OCI-LY7 (cell line): ENCODE measurements at regions of chr6 and their contacts with region 1.

Region 1: DNA sequence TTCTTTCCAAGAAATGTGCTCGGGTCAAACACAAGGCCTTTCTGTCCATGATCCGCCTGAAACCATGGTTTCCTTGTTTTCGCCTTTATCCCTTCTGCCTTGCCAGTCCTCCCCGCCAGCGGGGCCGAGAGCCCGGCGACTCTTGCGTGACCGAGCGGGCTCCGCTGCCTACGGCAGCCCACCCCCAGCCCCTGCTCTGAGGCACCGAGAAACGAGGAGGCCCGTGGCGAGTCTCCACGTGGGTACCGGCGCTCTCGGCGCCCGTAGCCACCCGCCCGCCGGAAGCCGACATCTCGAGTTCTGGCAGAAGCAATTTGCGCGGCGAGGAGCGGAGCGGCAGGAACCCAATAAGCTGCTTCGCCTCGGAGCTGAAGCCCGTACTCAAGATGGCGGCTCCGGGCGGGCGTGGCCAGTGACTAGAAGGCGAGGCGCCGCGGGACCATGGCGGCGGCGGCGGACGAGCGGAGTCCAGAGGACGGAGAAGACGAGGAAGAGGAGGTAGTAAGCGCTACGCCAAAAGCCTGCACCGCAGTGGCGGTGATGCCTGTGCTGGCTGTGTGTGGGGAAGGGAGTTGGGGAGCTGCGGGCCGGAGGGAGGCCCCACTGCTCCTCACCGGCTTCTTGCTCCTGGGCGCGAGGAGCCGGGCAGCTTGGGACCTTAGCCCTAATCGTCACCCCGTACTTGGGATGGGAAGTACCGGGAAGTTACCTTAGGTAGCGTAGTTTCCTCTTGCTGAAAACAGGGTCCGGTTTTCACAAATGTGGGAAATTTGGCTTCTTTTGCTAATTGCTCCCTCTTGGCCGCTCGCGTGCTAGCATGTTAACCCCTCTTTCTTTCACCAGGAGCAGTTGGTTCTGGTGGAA is at the start of gene GTF3C6:
- DNase-seq: peak; percentile 96
- H3K4me3 ChIP-seq: peak within 1 kb of the TSS; percentile 78
- H3K27ac ChIP-seq: peak within 1 kb of the TSS; percentile 49
- H3K4me1 ChIP-seq: peaks cover 17% of the 10 kb centered on the region
- CTCF ChIP-seq: no peak
- total RNA-seq, gene GTF3C6: 29.7 and 56.8 TPM in 2 replicates

Region 2: DNA sequence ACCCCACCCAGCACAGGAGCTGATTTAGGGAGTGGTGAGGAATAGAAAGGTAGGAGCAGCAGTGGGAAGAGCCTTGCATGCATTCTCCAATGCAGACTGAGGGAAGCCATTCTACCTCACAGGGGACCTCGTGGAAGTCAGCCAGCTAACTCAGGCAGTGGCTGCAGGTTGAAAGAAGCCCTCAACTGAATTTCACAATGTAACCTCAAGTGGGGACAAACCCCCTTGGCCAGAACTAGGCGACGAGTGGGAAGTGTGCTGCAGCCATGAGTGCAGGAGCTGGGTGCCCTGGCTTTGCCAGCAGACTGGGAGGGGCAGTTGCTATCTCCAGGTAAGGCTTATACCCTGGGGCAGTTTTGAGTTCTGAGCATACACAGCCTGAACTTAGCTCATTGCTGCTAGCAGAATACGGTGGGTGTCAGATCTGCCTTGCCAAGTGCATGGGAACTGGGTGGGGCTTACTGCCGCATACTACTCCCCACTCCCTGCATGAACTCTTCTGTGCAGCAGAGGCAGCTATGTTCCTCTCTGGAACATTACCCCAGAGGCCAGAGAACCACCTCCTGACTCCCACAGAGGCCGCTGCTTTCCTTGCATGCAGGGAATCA is 269.8 kb before region 1 on chr6:
- CTCF ChIA-PET with region 1: no interaction called
- POLR2A ChIA-PET with region 1: no interaction called
- intact Hi-C with region 1: no loop called
- DNase-seq: no peak
- H3K4me3 ChIP-seq: no peak overlapping the region
- H3K27ac ChIP-seq: no peak overlapping the region
- H3K4me1 ChIP-seq: peaks cover 5% of the 10 kb centered on the region
- CTCF ChIP-seq: no peak

Region 3: GRCh38 chr6:110815217-110816109 is 143.1 kb before region 1 on chr6 and contains the start of gene CDK19:
- CTCF ChIA-PET with region 1: no interaction called
- POLR2A ChIA-PET with region 1: interaction called, 3 read pairs
- intact Hi-C with region 1: loop called (anchors 2 kb)
- DNase-seq: peak; percentile 99
- H3K4me3 ChIP-seq: peak within 1 kb of the TSS; percentile 78
- H3K27ac ChIP-seq: peak within 1 kb of the TSS; percentile 87
- H3K4me1 ChIP-seq: peaks cover 41% of the 10 kb centered on the region
- CTCF ChIP-seq: no peak
- total RNA-seq, gene CDK19: 15.4 and 16.3 TPM in 2 replicates

Region 4: DNA sequence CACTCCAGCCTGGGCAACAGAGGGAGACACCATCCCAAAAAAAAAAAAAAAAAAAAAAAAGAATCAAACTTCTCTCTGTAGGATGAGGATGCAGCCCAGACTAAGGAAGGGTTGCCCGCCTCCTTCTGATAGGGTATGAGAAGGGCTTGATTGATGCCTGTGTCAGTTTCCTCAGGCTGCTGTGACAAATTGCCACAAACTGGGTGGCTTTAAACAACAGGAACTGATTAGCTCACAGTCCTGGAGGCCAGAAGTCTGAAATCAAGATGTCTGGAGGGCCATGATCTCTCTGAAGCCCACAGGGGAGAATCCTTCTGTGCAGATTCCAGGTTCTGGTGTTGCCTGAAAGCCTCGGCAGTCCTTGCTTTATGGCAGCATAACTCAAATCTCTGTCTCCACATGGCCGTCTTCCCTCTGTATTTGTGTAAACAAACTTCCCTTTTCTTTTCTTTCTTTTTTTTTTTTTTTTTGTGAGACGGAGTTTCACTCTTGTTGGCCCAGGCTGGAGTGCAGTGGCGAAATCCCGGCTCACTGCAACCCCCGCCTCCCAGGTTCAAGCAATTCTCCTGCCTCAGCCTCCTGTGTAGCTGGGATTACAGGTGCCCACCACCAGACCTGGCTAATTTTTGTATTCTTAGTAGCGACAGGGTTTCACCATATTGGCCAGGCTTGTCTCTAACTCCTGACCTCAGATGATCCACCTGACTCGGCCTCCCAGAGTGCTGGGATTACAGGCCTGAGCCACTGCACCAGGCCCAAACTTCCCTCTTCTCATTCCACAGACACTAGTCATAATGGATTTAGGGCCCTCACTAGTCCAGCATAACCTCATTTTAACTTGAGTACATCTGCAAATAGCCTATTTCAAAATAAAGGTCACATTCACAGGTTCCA is 132.1 kb before region 1 on chr6:
- CTCF ChIA-PET with region 1: no interaction called
- POLR2A ChIA-PET with region 1: no interaction called
- intact Hi-C with region 1: no loop called
- DNase-seq: no peak
- H3K4me3 ChIP-seq: no peak overlapping the region
- H3K27ac ChIP-seq: no peak overlapping the region
- H3K4me1 ChIP-seq: no peaks in the 10 kb centered on the region
- CTCF ChIP-seq: no peak

Region 5: GRCh38 chr6:110971468-110971867 is 12.9 kb after region 1 on chr6:
- CTCF ChIA-PET with region 1: interaction called, 5 read pairs
- POLR2A ChIA-PET with region 1: interaction called, 14 read pairs
- intact Hi-C with region 1: no loop called
- DNase-seq: no peak
- H3K4me3 ChIP-seq: no peak overlapping the region
- H3K27ac ChIP-seq: no peak overlapping the region
- H3K4me1 ChIP-seq: no peaks in the 10 kb centered on the region
- CTCF ChIP-seq: no peak